BJ (cell line): ENCODE measurements at regions of chr4 and their contacts with region 1.

Region 1: DNA sequence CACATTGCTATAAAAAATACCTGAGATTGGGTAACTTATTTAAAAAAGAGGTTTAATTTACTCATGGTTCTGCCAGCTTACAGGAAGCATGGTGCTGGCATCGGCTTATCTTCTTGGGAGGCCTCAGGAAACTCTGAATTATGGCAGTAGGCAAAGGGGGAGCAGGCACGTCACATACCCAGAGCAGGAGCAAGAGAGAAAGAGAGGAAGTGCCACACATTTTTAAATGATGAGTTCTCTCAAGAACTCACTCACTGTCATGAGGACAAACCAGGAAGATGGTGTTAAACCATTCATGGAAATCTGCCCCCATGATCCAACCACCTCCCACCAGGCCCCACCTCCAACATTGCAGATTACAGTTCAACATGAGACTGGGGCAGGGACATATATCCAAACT is 10.0 kb upstream of the AFF1 start:
- DNase-seq: no peak
- H3K4me3 ChIP-seq: no peak overlapping the region
- H3K27me3 ChIP-seq: no peaks in the 10 kb centered on the region
- CTCF ChIP-seq: no peak

Region 2: DNA sequence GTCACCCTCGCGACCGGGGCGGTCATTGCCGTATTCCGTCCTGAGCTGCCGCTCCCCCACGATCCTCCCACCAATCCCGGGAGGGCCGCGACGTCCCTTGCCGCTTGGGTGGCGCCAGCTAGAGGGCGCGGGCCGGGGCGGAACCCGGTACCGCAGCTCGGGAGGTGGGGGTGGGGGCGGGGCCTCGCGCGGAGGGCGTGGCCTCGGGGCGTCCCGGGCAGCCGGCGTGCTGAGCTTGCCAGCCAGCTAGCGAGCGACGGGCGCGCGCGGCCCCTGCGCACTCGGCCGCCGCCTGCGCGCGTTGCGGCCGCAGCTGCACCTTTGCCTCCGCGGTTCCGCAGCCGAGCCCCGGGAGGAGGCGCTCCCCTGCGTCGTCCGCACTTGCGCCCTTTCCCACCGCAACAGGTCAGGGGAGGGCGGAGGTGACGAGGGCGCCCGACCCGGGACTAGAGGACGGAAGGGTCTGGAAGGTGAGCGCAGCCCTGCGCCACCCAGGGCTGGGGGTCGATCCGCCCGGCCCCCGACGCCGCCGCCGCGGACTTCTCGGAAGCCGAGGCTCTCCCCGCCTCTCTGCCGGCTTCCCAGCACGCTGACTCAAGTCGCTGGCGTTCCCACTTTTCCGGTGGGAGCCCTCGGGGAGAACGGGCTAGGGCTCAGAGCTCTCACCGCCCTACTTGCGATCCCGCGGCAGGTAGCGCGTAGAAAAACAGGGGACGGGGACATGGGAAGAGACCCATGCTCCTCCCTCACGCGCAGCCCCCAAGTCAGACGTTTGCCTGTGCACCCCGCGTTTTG is 10.2 kb after region 1 on chr4 and contains the start of gene AFF1:
- CTCF ChIA-PET with region 1: interaction called, 27 read pairs
- POLR2A ChIA-PET with region 1: interaction called, 7 read pairs
- DNase-seq: no peak
- H3K4me3 ChIP-seq: peak within 1 kb of the TSS; percentile 96
- H3K27me3 ChIP-seq: no peaks in the 10 kb centered on the region
- CTCF ChIP-seq: peak; percentile 40; the same call in 1 of the 2 replicates
- polyA plus RNA-seq, gene AFF1: 7.5 and 11.0 TPM in 2 replicates

Region 3: GRCh38 chr4:87006676-87007527 is 82.1 kb after region 1 on chr4:
- CTCF ChIA-PET with region 1: interaction called, 16 read pairs
- POLR2A ChIA-PET with region 1: interaction called, 6 read pairs
- DNase-seq: peak; percentile 38
- H3K4me3 ChIP-seq: peak overlapping the region; percentile 73
- H3K27me3 ChIP-seq: no peaks in the 10 kb centered on the region
- CTCF ChIP-seq: no peak

Region 4: DNA sequence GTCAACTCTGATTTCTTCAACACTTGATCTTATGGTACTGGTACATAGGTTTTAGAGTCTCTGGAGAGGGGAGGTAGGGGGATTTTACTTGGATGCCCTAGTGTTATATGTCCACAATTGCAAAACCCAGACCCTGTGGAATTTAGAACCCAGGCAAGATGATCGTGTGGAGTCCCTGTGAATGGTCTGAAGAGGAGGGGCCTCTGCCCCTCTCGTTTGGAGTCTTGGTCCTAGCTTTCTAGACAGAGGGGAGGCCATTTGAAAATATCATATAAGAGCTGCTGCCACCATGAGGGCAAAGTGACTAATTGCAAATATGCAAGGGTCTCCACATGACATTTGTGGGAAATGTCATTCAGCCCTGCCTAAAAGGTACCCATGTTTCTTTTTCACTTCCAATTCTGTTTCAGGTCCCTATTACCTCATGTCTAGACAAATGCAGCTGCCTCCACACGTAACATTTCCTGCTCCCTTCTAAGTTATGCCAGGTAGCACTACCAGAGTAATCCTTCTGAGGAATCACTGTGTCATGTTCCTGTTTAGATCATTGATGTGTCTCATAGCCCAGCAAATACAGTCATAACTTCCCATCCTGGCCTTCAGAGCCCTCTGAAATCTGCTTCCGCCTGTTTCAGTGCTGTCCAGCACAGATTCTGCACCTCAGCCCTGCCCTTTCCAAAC is 168.8 kb after region 1 on chr4:
- CTCF ChIA-PET with region 1: interaction called, 52 read pairs
- POLR2A ChIA-PET with region 1: no interaction called
- DNase-seq: no peak
- H3K4me3 ChIP-seq: no peak overlapping the region
- H3K27me3 ChIP-seq: no peaks in the 10 kb centered on the region
- CTCF ChIP-seq: peak; percentile 55

Region 5: DNA sequence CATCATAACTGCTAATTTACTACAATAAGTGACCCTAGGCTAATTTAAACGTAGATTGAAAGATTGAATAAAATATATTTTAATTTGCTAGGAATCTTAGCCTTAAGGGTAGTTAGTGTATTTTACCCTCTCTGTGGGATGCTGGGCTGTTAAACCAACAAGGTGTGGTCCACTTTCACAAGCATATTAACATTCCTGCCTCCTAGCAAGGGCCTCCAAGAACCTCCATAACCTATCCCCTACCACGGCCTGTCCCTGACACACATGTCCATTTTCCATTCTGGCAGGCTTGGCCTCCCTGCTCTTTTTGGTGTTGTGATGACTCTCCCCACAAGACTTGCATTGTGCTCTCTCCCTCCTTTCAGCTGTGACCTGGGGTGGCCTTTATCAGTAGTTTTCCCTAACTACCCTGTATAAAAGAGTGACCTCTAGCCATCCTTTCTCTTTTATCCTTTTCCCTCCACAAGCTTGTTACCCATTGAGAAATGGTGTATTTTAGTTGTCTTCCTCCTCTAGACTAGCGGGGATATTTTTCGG is 175.4 kb after region 1 on chr4:
- CTCF ChIA-PET with region 1: interaction called, 10 read pairs
- POLR2A ChIA-PET with region 1: no interaction called
- DNase-seq: no peak
- H3K4me3 ChIP-seq: no peak overlapping the region
- H3K27me3 ChIP-seq: no peaks in the 10 kb centered on the region
- CTCF ChIP-seq: no peak

Region 6: DNA sequence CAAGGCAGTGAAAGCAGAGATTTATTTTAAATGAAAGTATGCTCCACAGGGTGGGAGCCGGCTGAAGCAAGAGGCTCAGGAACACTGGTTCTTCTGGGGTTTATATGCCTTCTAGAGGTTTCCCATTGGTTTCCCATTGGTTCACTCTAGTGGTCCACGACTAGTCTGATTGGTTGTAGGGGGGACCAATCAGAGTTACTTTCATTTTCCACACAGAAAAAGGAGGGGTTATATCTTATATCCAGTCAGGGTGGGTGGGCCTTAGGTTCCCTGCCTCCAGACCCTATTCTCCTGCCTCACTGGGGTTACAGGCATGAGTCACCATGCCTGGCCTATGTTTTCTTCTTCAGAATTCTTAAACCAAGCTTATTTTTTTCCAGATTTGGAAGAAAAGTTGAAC is 194.0 kb after region 1 on chr4:
- CTCF ChIA-PET with region 1: interaction called, 11 read pairs
- POLR2A ChIA-PET with region 1: no interaction called
- DNase-seq: no peak
- H3K4me3 ChIP-seq: no peak overlapping the region
- H3K27me3 ChIP-seq: no peaks in the 10 kb centered on the region
- CTCF ChIP-seq: no peak

Region 7: DNA sequence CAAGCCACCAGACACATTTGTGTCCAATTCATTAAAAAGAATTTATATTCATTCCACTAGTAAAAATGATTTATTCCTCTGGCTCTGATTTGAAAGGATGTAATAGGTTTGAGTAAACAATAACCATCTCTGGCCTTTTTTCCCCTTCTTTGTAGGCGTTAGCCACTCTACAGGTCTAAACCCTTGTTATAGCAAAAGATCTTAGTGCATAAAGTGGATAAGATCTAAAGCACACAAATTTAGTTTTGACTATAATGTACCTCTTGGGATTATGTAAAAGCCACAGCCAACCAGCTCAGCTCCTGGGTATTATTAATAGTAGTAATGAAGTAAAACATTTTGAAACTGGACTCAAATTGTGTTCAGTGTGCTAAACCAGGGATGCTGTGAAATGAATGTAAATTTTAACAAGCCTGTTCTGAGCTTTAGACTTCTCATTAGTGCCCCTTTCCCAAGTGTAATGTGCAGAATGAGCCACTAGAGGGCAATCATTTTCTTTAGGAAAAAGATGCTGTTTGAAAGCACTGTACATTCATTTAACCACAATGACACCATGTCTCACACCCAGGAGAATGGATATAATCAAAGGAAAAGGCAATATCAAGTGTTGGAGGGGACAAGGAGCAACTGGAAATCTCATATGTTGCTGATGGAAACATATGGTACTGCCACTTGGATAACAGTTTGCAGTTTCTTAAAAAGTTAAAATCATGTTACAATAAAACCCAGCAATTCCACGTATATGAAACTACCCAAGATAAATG is 225.9 kb after region 1 on chr4:
- CTCF ChIA-PET with region 1: interaction called, 12 read pairs
- POLR2A ChIA-PET with region 1: no interaction called
- DNase-seq: peak; percentile 23
- H3K4me3 ChIP-seq: no peak overlapping the region
- H3K27me3 ChIP-seq: no peaks in the 10 kb centered on the region
- CTCF ChIP-seq: peak; percentile 83

Region 8: GRCh38 chr4:87559109-87559837 is 634.5 kb after region 1 on chr4:
- CTCF ChIA-PET with region 1: no interaction called
- POLR2A ChIA-PET with region 1: no interaction called
- DNase-seq: no peak
- H3K4me3 ChIP-seq: no peak overlapping the region
- H3K27me3 ChIP-seq: no peaks in the 10 kb centered on the region; the same call in 1 of the 2 replicates
- CTCF ChIP-seq: no peak